Panc1 (cell line): ENCODE measurements at regions of chr18 and their contacts with region 1.

Region 1: GRCh38 chr18:69947361-69948133 is at the start of gene CD226:
- DNase-seq: no peak
- ATAC-seq: no peak
- H3K4me3 ChIP-seq: no peak within 1 kb of the TSS
- H3K27ac ChIP-seq: no peak within 1 kb of the TSS
- H3K4me1 ChIP-seq: no peaks in the 10 kb centered on the region
- H3K27me3 ChIP-seq: no peaks in the 10 kb centered on the region
- CTCF ChIP-seq: no peak
- total RNA-seq, gene CD226: 0.95 TPM

Region 2: DNA sequence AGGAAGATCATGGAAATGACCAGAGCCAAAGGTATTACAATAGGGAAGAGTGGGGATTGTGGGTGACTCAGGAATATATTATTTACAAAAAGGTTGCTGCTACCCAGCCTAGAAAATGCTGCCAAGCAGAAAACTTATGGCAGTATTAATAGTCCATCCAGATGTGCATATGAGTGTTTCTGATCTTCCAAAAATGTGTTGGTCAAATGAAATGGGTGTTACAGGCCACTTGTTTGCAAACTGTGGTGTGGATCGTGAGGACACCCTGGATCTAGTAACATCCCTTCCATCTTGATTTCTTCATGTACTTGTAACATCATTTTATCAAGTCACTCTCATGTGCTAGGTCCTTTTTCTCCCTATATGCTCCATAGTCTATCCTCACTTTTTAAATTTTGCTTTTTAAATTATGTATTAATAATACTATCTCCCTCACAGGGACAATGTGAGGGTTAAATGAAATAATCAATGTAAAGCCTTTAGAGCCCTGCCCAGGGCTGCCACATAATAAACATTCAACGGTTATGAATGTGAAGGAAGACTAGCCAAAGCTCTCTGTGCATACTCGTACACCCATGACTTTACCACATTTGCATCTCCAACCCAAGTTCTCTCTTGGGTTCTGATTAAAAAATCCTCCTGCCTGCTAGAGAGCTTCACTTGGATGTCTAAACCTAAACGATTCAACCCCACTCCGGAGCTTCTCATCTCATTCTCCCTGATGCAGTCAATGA is 18.3 kb before region 1 on chr18:
- CTCF ChIA-PET with region 1: no interaction called
- POLR2A ChIA-PET with region 1: no interaction called
- in situ Hi-C with region 1: no loop called
- intact Hi-C with region 1: loop called (anchors 1 kb)
- DNase-seq: no peak
- ATAC-seq: no peak
- H3K4me3 ChIP-seq: no peak overlapping the region
- H3K27ac ChIP-seq: no peak overlapping the region
- H3K4me1 ChIP-seq: no peaks in the 10 kb centered on the region
- H3K27me3 ChIP-seq: no peaks in the 10 kb centered on the region
- CTCF ChIP-seq: no peak